ENCODE measurements at regions of chr4 and their contacts with region 1.

Region 1: DNA sequence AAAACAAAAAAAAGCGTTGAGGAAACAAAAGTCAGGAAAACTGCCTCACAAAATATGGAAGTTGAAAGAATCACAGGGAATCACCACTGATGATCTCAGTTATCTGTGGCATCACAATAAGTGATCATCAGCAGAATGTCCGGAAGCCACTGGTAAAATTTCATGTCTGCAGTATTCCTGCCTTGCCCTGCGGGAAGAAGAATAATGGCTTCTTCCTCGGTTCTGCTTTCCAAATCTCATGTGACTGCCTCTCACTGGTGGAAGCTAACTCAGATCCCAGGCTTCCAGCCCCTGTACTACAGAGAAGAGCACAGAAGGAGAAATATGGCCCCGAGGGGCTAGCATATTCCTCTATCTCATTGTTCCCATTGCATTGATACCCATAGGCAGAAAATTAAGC is 12.7 kb upstream of the ZNF330 start:
- DNase-seq: no peak

Region 2: DNA sequence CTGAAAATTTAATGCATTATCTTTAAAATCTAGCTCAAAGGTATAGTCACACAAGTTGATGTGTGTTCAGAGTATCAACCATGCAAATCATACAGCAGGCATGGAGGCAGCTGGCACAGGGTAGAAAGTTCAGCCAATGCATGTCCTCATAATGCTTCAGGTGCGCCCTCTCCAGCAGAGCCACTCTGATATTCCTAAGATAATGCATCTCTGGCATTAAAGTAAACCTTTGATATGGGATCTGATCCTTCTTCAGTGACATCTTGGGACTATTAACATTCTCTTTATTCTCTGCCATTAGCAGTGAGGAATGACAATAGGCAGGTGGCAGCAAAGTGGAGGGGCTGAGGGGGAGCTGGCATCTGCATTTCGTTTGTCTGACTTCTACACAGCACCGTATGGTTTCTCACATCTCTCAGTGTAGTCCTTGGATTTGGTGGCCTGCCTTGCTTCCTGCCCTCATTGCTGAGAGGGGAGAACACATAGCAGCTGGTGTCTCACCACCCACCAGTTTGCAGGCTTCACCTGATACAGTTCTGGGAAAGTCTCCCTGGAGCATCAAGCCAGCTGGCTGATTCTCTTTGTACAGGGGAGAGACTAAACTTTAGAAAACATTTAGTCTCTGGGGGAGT is 283.1 kb before region 1 on chr4:
- intact Hi-C with region 1: no loop called
- DNase-seq: no peak

Region 3: DNA sequence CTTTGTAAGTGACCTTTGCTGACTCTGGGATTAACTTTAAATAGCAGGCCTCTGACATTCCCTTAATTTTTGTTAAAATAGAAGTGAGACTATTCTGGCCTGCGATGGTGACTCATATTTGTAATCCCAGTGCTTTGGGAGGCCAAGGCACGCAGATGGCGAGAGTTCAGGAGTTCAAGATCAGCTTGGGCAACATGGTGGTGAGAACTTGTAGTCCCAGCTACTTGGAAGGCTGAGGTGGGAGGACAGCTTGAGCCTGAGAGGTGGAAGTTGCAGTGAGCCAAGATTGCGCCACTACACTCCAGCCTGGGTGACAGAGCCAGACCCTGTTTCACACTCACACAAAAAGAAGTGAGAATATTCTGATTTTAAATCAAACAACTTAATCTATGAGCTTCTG is 40.1 kb after region 1 on chr4:
- intact Hi-C with region 1: loop called in 1 of 2 experiments (anchors 2 kb)
- DNase-seq: no peak